ENCODE measurements at regions of chr5 and their contacts with region 1.

Region 1: DNA sequence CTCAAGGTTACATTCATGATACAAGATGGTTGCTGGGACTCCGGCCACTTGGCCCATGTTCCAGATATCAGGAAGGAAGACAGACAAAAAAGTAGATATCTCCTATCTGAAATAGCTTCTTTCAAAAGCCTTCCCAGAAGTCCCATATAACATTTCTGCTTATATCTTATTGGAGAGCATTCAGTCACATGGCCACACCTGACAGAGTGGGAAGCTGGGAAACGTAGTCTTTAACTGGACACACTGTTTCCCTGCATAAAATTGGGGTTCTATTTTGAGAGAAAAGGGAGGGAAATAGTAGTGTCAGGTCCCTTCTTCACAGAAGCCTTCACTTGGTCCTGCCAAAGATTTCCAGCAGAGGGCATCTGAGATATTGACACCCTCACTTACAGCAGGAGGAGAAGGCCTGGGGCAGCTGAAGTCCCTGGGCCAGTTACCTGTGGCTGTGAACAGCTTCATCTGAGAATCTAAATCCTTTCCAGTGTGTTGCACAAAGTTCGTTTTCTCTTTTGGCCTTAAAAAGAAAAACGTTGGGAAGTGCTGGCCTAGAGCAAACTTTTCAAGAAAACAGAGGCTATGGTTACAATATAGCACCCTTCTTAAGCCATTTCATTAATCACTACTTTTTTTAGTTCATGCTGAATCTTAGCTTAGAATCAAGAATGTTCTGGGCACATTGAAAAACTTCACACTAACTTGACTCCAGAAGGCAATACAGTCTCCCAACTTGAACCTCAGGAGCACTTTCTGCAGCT is 33.5 kb downstream of the SPEF2 start:
- DNase-seq: peak; percentile 68
- H3K4me3 Mint-ChIP-seq: no peak overlapping the region
- H3K27ac Mint-ChIP-seq: no peak overlapping the region
- H3K4me1 Mint-ChIP-seq: peaks cover 2% of the 10 kb centered on the region
- H3K27me3 Mint-ChIP-seq: no peaks in the 10 kb centered on the region

Region 2: GRCh38 chr5:35365758-35366157 is 285.4 kb before region 1 on chr5:
- CTCF ChIA-PET with region 1: no interaction called
- POLR2A ChIA-PET with region 1: no interaction called
- DNase-seq: no peak
- H3K4me3 Mint-ChIP-seq: no peak overlapping the region
- H3K27ac Mint-ChIP-seq: no peak overlapping the region
- H3K4me1 Mint-ChIP-seq: no peaks in the 10 kb centered on the region
- H3K27me3 Mint-ChIP-seq: peaks cover 10% of the 10 kb centered on the region

Region 3: DNA sequence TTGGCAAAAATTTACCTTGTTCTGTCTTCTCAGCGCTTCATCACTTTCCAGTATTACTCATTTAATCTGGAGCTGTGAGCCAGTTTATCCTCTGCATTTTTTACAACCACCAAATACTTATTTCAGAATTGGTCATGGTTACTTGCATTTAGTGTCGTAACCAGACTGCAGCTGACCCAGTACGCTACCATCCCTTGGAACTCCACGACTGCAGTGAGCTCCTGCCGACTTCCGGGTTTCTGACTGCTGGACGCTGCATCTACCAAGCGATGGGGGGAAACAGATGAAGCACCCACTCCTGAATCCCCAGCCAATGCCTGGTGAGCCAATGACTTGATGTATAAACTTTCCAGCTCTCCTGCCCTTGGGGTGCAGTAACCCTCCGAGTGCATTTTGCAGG is 246.5 kb before region 1 on chr5:
- CTCF ChIA-PET with region 1: no interaction called
- POLR2A ChIA-PET with region 1: no interaction called
- DNase-seq: no peak
- H3K4me3 Mint-ChIP-seq: no peak overlapping the region
- H3K27ac Mint-ChIP-seq: no peak overlapping the region
- H3K4me1 Mint-ChIP-seq: no peaks in the 10 kb centered on the region
- H3K27me3 Mint-ChIP-seq: peaks cover 1% of the 10 kb centered on the region

Region 4: DNA sequence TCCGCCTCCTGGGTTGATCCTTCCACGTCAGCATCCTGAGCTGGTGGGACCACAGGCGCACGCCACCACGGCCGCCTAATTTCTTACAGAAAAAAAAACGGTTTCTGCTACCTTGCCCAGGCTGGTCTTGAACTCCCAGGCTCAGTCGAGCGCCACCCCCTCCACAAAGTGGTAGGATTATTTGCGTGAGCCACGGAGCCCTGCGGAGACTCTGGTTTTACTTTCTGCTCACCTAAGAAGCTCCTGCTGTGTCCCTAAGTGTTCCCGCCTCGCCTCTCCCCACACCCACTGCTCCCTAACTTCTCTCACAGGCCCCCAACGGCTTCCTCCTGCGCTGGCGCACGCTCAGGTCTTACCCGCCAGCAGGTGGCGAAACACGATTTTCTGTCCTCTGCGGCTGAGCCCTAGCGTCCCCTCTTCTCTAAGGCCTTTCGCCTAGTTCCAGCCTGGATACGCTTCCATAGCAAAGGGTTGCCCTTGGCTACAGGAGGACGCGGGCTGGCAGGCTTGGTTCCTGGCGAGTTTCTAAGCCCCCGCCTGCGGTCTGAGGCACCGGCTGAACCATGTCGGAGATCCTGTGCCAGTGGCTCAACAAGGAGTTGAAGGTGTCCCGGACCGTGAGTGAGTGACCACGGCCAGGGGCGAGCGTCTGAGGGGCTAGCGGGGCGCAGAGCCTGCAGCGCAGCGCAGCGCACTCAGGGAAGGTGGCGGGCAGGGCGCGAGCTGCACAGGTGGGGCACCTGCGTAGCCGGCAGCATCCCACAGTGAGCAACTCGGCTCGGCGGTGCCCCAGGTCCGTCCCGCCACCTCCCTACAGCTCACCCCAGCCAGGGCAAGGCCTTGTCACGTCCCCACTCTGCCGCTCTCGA is 33.5 kb before region 1 on chr5 and contains the start of gene SPEF2:
- CTCF ChIA-PET with region 1: interaction called, 13 read pairs
- POLR2A ChIA-PET with region 1: no interaction called
- DNase-seq: peak; percentile 85
- H3K4me3 Mint-ChIP-seq: peak within 1 kb of the TSS; percentile 75
- H3K27ac Mint-ChIP-seq: peak within 1 kb of the TSS; percentile 87
- H3K4me1 Mint-ChIP-seq: peaks cover 41% of the 10 kb centered on the region
- H3K27me3 Mint-ChIP-seq: no peaks in the 10 kb centered on the region
- total RNA-seq, gene SPEF2: 10.8 to 13.1 TPM

Region 5: DNA sequence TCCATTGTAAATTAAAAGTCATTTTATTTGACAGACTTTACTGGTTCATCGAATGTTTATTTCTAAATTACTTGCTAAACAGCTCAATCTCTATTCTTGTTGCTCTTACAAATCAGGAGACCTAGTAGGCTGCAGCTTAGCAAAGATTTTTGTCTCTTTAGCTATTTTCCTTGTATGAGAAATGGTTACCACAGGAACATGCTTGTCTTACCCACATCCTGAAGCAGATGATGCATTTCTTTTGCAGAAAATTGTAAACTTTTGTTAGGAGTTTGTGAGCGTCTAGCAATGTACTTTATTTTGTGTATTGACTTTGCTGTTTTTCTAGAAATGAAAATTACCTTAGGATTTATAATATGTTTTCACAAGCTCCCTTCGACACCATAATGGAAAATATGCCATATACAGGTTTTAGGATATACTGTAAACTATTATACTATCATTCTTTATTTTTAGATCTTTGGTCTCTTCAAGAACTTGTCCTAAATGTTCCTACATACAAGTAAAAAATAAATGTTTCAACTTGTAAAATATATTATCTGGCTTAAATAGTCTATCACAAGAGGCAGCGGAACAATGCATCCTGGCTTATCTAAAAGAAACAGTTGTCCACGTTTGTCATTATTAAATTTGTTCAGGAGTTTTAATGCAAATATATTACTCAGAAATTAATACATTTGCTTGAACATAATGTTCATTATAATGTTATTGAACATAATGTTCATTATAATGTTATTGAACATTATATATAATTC is 20.5 kb after region 1 on chr5:
- CTCF ChIA-PET with region 1: interaction called, 17 read pairs
- POLR2A ChIA-PET with region 1: interaction called, 3 read pairs
- DNase-seq: no peak
- H3K4me3 Mint-ChIP-seq: peak overlapping the region; percentile 5
- H3K27ac Mint-ChIP-seq: peak overlapping the region; percentile 57
- H3K4me1 Mint-ChIP-seq: peaks cover 55% of the 10 kb centered on the region
- H3K27me3 Mint-ChIP-seq: no peaks in the 10 kb centered on the region